SK-N-SH (cell line): ENCODE measurements at regions of chr11 and their contacts with region 1.

Region 1: GRCh38 chr11:19742588-19743292 is 30.1 kb downstream of the NAV2 start:
- DNase-seq: peak; percentile 68
- H3K4me3 ChIP-seq: no peak overlapping the region; a peak in 1 of 4 replicates
- H3K27ac ChIP-seq: peak overlapping the region in 1 of 2 experiments; percentile 93; a peak in 2 of 4 replicates
- H3K4me1 ChIP-seq: peaks cover 6 to 55% of the 10 kb centered on the region in 2 experiments; a peak in 2 of 4 replicates
- H3K27me3 ChIP-seq: no peaks in the 10 kb centered on the region
- CTCF ChIP-seq: peak; percentile 86
- EP300 ChIP-seq: peak in 1 of 2 experiments; percentile 90; a peak in 2 of 4 replicates
- RAD21 ChIP-seq: peak; percentile 93

Region 2: GRCh38 chr11:19071255-19071654 is 671.5 kb before region 1 on chr11:
- CTCF ChIA-PET with region 1: interaction called, 12 read pairs
- POLR2A ChIA-PET with region 1: no interaction called
- DNase-seq: peak; percentile 81
- H3K4me3 ChIP-seq: peak overlapping the region; percentile 27 to 30; a peak in 3 of 4 replicates
- H3K27ac ChIP-seq: no peak overlapping the region
- H3K4me1 ChIP-seq: peaks cover 0 to 2% of the 10 kb centered on the region in 2 experiments; a peak in 1 of 4 replicates
- H3K27me3 ChIP-seq: no peaks in the 10 kb centered on the region
- CTCF ChIP-seq: peak; percentile 99
- EP300 ChIP-seq: no peak
- RAD21 ChIP-seq: peak; percentile 93

Region 3: GRCh38 chr11:19566583-19567379 is 176.0 kb before region 1 on chr11:
- CTCF ChIA-PET with region 1: interaction called, 92 read pairs
- POLR2A ChIA-PET with region 1: interaction called, 5 read pairs
- DNase-seq: no peak
- H3K4me3 ChIP-seq: no peak overlapping the region
- H3K27ac ChIP-seq: no peak overlapping the region
- H3K4me1 ChIP-seq: peaks cover 0 to 33% of the 10 kb centered on the region in 2 experiments; a peak in 2 of 4 replicates
- H3K27me3 ChIP-seq: no peaks in the 10 kb centered on the region
- CTCF ChIP-seq: no peak
- EP300 ChIP-seq: no peak
- RAD21 ChIP-seq: no peak

Region 4: GRCh38 chr11:19580646-19581045 is 162.1 kb before region 1 on chr11:
- CTCF ChIA-PET with region 1: no interaction called
- POLR2A ChIA-PET with region 1: no interaction called
- DNase-seq: no peak
- H3K4me3 ChIP-seq: no peak overlapping the region
- H3K27ac ChIP-seq: no peak overlapping the region
- H3K4me1 ChIP-seq: peaks cover 15 to 32% of the 10 kb centered on the region in 2 experiments
- H3K27me3 ChIP-seq: no peaks in the 10 kb centered on the region
- CTCF ChIP-seq: no peak
- EP300 ChIP-seq: no peak
- RAD21 ChIP-seq: no peak

Region 5: GRCh38 chr11:19660076-19660475 is 82.7 kb before region 1 on chr11:
- CTCF ChIA-PET with region 1: interaction called, 25 read pairs
- POLR2A ChIA-PET with region 1: no interaction called
- DNase-seq: no peak
- H3K4me3 ChIP-seq: no peak overlapping the region
- H3K27ac ChIP-seq: peak overlapping the region; percentile 61 to 67
- H3K4me1 ChIP-seq: peaks cover 0 to 33% of the 10 kb centered on the region in 2 experiments; a peak in 1 of 4 replicates
- H3K27me3 ChIP-seq: no peaks in the 10 kb centered on the region
- CTCF ChIP-seq: no peak
- EP300 ChIP-seq: peak in 1 of 2 experiments; percentile 78; a peak in 1 of 4 replicates
- RAD21 ChIP-seq: no peak

Region 6: GRCh38 chr11:19712281-19713220 is 30.2 kb before region 1 on chr11 and contains the start of gene NAV2:
- CTCF ChIA-PET with region 1: interaction called, 45 read pairs
- POLR2A ChIA-PET with region 1: interaction called, 17 read pairs
- DNase-seq: peak; percentile 93
- H3K4me3 ChIP-seq: peak within 1 kb of the TSS; percentile 80
- H3K27ac ChIP-seq: peak within 1 kb of the TSS; percentile 94 to 99
- H3K4me1 ChIP-seq: peaks cover 8 to 49% of the 10 kb centered on the region in 2 experiments
- H3K27me3 ChIP-seq: no peaks in the 10 kb centered on the region
- CTCF ChIP-seq: no peak
- EP300 ChIP-seq: 0 out of 4 replicates have a peak, but pooled peaks of 1 of the 2 experiments have one; percentile 54
- RAD21 ChIP-seq: no peak; the same call in 1 of the 2 replicates
- polyA plus RNA-seq, gene NAV2: 19.0 and 26.2 TPM in 2 replicates

Region 7: DNA sequence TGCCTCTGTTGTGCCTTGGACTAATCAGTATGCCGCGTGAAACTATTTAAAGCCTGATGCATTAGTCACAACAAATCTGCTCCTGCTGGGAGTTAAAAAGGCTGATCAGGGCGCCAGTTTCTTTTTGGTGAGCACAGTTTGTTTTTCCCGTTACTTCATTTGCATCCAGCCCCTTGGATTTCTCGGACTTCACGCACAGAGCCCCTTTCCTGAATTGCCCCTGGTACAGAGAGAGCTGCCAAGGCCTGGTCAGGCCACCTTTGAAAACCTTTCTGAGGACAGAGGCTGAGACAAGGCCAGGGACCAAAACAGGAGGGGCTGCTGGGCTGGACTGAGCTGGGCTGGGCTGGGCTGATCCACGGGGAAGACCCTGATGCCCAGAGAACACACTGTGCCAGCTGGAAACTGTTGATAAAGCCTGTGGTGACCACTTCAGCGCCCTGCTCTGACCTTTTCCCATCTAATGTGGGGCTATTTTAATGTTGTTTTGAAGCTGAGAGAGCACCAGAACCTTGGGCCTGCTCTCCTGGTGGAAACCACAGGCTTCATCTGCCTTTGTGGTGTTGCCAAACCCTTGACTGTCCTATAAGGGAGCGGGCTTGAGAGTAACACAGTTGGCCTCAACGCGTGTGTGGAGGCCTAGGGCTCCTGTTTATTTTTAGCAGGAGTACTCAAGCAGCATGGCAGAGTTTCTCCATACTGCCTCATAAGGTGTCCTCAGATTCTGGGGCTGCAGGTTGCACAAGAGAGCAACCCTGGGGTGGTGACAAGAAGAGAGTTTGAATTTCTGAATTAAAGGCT is 14.1 kb after region 1 on chr11:
- CTCF ChIA-PET with region 1: interaction called, 18 read pairs
- POLR2A ChIA-PET with region 1: no interaction called
- DNase-seq: no peak
- H3K4me3 ChIP-seq: no peak overlapping the region
- H3K27ac ChIP-seq: no peak overlapping the region
- H3K4me1 ChIP-seq: peaks cover 0 to 44% of the 10 kb centered on the region in 2 experiments; a peak in 1 of 4 replicates
- H3K27me3 ChIP-seq: no peaks in the 10 kb centered on the region
- CTCF ChIP-seq: no peak
- EP300 ChIP-seq: no peak
- RAD21 ChIP-seq: no peak

Region 8: DNA sequence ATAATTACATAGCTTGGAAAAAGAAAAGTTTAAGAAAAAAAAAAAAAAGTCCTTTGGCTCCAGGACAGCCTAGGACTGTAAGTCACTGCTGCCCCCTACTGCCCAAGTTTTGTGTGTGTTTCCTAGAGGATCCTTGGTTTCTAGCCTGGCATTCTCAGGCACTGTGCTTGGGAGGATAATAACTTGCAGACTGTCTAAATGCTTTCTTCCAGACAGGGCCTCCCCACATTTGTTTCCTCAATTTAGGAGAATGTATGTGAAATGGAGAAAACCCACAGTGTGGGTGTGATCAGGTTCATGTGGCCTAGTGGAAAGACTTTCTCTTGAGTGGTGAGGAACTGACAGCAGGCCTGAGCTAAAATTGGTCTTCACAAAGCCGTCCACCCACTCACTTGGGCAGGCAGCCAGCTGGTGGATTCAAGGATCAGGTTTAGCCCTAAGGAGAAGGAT is 160.9 kb after region 1 on chr11:
- CTCF ChIA-PET with region 1: interaction called, 24 read pairs
- POLR2A ChIA-PET with region 1: no interaction called
- DNase-seq: peak; percentile 59
- H3K4me3 ChIP-seq: no peak overlapping the region; a peak in 1 of 4 replicates
- H3K27ac ChIP-seq: peak overlapping the region; percentile 50 to 57
- H3K4me1 ChIP-seq: peaks cover 0 to 10% of the 10 kb centered on the region in 2 experiments; a peak in 2 of 4 replicates
- H3K27me3 ChIP-seq: no peaks in the 10 kb centered on the region
- CTCF ChIP-seq: peak; percentile 88
- EP300 ChIP-seq: 0 out of 4 replicates have a peak, but pooled peaks of 1 of the 2 experiments have one; percentile 14
- RAD21 ChIP-seq: peak; percentile 90